Endothelial cell of umbilical vein (primary cell): ENCODE measurements at regions of chr15 and their contacts with region 1.

Region 1: DNA sequence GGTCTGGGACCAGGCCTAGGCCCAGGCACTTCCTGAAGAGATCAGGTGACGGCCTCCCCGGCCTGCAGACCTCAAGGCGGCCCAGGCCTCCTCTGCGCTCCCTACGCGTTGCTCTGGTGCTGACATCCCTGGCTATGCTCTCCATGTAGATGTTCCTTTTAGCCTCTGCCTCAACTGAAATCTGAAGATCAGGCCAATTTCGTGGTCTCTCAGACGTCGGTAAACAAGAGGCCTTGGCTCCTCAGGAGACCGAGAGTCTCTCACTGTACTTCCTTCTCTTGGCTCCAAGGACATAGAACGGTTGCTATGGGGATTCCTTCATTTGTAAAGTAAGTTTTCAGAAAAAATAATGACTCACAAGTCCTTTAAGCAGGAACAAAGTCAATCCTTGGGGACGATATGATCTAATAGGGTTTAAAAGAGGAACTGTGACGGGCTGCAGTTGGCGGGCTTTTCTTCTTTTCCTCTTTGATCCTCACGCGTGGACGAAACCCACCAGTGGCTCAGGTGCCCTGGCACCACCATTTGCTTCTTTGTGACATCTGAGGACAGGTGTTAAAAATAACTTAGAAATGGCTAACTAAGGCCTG is 55.6 kb upstream of the CGNL1 start:
- DNase-seq: peak; percentile 74
- H3K4me3 ChIP-seq: no peak overlapping the region
- H3K27ac ChIP-seq: peak overlapping the region; percentile 83
- H3K4me1 ChIP-seq: peaks cover 35% of the 10 kb centered on the region
- H3K27me3 ChIP-seq: no peaks in the 10 kb centered on the region
- CTCF ChIP-seq: no peak
- POLR2A ChIP-seq: no peak

Region 2: DNA sequence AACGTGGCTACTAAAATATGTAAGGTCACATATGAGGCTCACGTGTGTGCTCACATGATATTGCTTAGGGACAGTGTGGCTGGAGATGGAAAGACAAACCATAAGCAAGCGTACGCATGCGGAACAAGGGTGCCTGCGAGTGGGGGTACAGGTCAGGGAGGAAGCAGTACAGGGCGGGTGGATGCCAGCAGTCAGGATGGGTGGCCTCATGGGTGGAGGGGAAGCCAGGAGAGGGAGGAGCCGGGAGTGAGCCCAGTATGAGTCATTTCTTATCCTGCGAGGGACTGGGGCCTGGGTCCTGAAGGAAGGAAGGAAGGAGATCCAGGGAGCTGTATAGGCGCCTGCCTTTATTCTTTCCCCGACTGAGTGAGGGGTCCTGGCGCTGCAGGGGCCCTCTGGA is 13.5 kb after region 1 on chr15:
- CTCF ChIA-PET with region 1: interaction called, 8 read pairs
- POLR2A ChIA-PET with region 1: no interaction called
- dilution Hi-C with region 1: no loop called
- intact Hi-C with region 1: loop called (anchors 1 kb)
- DNase-seq: peak; percentile 83
- H3K4me3 ChIP-seq: no peak overlapping the region
- H3K27ac ChIP-seq: peak overlapping the region; percentile 48
- H3K4me1 ChIP-seq: peaks cover 55% of the 10 kb centered on the region
- H3K27me3 ChIP-seq: no peaks in the 10 kb centered on the region
- CTCF ChIP-seq: no peak
- POLR2A ChIP-seq: no peak